ENCODE measurements at regions of chr12 and their contacts with region 1.

Region 1: DNA sequence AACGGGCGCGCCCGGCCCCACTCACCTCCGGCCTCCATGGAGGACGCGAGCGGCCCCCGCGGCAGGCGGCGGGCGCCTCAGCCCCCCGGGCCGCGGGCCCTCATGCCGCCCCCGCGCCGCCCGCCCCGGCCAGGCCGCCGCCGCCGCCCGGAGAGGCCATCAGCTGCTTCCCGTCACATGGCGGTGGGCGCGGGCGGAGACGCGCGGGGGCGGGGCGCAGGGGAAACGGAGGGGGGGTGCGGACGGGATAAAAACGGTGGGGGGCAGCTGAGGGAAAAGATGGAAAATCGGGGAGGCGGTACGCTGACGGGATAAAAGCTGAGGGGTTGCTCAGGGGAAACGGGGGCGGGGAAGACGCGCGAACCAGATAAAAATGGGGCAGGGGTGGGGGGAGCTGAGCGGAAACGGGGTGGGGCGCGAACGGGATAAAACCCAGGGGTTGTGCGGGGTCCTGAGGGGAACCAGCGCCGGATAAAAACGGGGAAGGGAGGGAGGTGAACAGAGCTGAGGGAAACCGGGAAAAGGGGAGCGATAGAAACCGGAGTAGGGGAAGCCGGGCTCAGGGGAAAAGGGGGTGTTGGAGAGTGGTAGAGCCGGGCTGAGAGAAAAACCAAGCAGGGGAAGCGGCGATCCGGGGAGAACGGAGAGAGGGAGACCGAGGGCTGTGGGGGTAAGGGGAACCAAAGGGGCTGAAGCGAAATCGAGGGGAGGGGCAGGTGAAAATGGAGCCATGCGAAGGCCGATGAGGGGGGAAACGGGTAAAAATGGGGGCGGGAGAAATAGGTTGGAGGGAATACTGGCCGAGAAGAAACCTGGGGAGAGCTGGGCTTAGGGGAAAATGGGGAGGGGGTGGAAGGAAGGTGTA is at the start of gene WSB2:
- DNase-seq: peak; percentile 61
- H3K4me3 ChIP-seq: peak within 1 kb of the TSS; percentile 83
- H3K4me3 Mint-ChIP-seq: peak within 1 kb of the TSS; percentile 95
- H3K27ac Mint-ChIP-seq: peak within 1 kb of the TSS; percentile 99
- H3K4me1 ChIP-seq: peaks cover 44% of the 10 kb centered on the region
- H3K4me1 Mint-ChIP-seq: peaks cover 27% of the 10 kb centered on the region
- H3K27me3 ChIP-seq: no peaks in the 10 kb centered on the region
- H3K27me3 Mint-ChIP-seq: no peaks in the 10 kb centered on the region
- CTCF ChIP-seq: no peak
- total RNA-seq, gene WSB2: 36.7 and 37.6 TPM in 2 replicates

Region 2: DNA sequence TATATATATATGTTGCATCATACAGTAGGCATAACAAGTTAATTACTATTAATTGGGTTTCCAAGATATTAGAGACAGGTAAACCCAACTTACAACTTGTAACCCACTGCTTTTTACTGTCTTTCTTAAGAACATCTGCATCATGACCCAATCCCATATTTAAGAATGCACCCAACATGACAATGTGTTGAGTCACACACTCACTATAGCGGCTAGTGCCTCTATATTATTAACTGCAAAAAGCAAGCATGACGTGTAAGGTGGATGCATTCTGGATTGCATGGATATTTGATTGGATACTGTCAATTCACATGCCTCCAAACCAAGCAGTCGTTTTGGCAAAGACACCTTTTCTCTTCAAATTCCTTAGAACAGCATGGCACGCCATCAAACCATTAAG is 160.7 kb before region 1 on chr12:
- CTCF ChIA-PET with region 1: no interaction called
- POLR2A ChIA-PET with region 1: no interaction called
- intact Hi-C with region 1: no loop called
- DNase-seq: no peak
- H3K4me3 ChIP-seq: no peak overlapping the region
- H3K4me3 Mint-ChIP-seq: no peak overlapping the region
- H3K27ac Mint-ChIP-seq: no peak overlapping the region
- H3K4me1 ChIP-seq: no peaks in the 10 kb centered on the region
- H3K4me1 Mint-ChIP-seq: no peaks in the 10 kb centered on the region
- H3K27me3 ChIP-seq: no peaks in the 10 kb centered on the region
- H3K27me3 Mint-ChIP-seq: no peaks in the 10 kb centered on the region
- CTCF ChIP-seq: no peak

Region 3: DNA sequence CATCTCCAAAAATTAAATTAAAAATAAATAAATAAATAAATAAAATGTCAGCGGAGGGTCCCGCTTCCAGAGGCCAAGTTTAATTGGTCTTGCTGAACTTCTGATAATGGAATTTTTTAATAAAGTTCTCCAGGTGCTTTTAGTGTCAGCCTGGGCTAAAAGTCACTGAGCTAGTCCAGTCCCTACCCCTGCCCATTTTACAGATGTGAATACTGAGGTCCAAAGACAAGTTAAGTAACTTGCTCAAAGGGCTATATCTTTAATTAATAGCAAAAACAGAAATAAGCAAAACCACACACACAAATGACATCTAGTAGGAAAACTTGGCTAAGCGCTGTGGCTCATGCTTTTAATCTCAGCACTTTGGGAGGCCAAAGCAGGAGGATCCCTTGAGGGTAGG is 50.3 kb before region 1 on chr12:
- CTCF ChIA-PET with region 1: no interaction called
- POLR2A ChIA-PET with region 1: interaction called, 10 read pairs
- intact Hi-C with region 1: no loop called
- DNase-seq: no peak
- H3K4me3 ChIP-seq: no peak overlapping the region
- H3K4me3 Mint-ChIP-seq: no peak overlapping the region
- H3K27ac Mint-ChIP-seq: no peak overlapping the region
- H3K4me1 ChIP-seq: peaks cover 4% of the 10 kb centered on the region; the same call in 1 of the 2 replicates
- H3K4me1 Mint-ChIP-seq: no peaks in the 10 kb centered on the region
- H3K27me3 ChIP-seq: no peaks in the 10 kb centered on the region
- H3K27me3 Mint-ChIP-seq: peaks cover 3% of the 10 kb centered on the region
- CTCF ChIP-seq: no peak

Region 4: DNA sequence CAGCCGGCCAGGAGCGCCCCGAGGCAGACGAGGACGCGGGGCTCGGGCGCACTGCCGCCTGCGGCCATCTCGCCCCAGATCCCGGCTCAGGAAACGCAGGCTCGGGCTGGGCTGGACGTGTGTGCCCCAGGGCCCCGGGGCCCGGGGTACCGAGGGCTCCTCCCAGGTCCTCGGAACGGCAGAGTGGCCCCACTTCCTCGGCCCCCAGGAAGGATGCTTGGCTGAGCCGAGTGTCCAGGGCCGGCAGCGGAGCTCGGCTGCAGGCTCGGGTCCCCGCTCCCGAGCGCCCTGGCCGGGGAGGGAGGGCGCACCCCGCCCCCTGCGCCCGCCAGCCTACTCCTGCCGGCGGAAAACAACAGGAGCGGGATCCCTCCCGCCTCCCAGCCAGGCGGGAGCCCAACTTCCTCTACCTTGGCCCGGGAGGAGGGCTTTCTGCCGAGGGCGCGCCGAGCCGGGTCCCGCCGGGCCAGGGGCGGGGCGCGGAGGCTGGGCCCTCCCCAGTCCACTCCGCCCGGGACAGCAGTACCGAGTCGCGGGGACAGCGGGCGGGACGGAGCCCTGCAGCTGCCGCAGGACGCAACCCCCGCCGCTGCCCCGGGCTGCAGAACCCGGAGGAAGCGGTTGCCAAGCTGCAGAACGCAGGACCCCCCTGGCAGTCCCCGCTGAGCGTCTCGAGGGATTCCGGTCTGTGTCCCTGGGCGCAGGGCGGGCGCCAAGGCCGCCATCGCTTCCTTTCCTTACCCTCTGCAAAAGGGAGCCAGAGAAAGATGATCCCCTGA is 42.5 kb after region 1 on chr12 and contains the start of gene VSIG10:
- CTCF ChIA-PET with region 1: no interaction called
- POLR2A ChIA-PET with region 1: interaction called, 6 read pairs
- intact Hi-C with region 1: loop called (anchors 2 kb)
- DNase-seq: peak; percentile 82 to 86
- H3K4me3 ChIP-seq: peak within 1 kb of the TSS; percentile 93
- H3K4me3 Mint-ChIP-seq: peak within 1 kb of the TSS; percentile 83
- H3K27ac Mint-ChIP-seq: peak within 1 kb of the TSS; percentile 77
- H3K4me1 ChIP-seq: peaks cover 32% of the 10 kb centered on the region
- H3K4me1 Mint-ChIP-seq: no peaks in the 10 kb centered on the region
- H3K27me3 ChIP-seq: no peaks in the 10 kb centered on the region
- H3K27me3 Mint-ChIP-seq: no peaks in the 10 kb centered on the region
- CTCF ChIP-seq: no peak
- total RNA-seq, gene VSIG10: 32.6 and 33.9 TPM in 2 replicates

Region 5: GRCh38 chr12:118120579-118121363 is 59.5 kb after region 1 on chr12:
- CTCF ChIA-PET with region 1: interaction called, 5 read pairs
- POLR2A ChIA-PET with region 1: no interaction called
- intact Hi-C with region 1: loop called (anchors 5 kb)
- DNase-seq: peak; percentile 67 to 68
- H3K4me3 ChIP-seq: no peak overlapping the region
- H3K4me3 Mint-ChIP-seq: no peak overlapping the region
- H3K27ac Mint-ChIP-seq: peak overlapping the region; percentile 69
- H3K4me1 ChIP-seq: peaks cover 14% of the 10 kb centered on the region
- H3K4me1 Mint-ChIP-seq: peaks cover 14% of the 10 kb centered on the region
- H3K27me3 ChIP-seq: no peaks in the 10 kb centered on the region
- H3K27me3 Mint-ChIP-seq: no peaks in the 10 kb centered on the region
- CTCF ChIP-seq: peak; percentile 77 to 78